Heart left ventricle (tissue), 16 donors: ENCODE measurements at regions of chr15 and their contacts with region 1.

Region 1: GRCh38 chr15:48861813-48862431 is 16.0 kb upstream of the EID1 start:
- DNase-seq: peak in 2 of 5 donors; percentile 24 to 46
- ATAC-seq: peak in 2 of 4 donors; percentile 70 to 78
- H3K4me3 ChIP-seq: no peak overlapping the region
- H3K27ac ChIP-seq: no peak overlapping the region
- H3K4me1 ChIP-seq: no peaks in the 10 kb centered on the region
- H3K27me3 ChIP-seq: no peaks in the 10 kb centered on the region
- CTCF ChIP-seq: peak; percentile 82 to 96 (median 86)
- POLR2A ChIP-seq: no peak

Region 2: DNA sequence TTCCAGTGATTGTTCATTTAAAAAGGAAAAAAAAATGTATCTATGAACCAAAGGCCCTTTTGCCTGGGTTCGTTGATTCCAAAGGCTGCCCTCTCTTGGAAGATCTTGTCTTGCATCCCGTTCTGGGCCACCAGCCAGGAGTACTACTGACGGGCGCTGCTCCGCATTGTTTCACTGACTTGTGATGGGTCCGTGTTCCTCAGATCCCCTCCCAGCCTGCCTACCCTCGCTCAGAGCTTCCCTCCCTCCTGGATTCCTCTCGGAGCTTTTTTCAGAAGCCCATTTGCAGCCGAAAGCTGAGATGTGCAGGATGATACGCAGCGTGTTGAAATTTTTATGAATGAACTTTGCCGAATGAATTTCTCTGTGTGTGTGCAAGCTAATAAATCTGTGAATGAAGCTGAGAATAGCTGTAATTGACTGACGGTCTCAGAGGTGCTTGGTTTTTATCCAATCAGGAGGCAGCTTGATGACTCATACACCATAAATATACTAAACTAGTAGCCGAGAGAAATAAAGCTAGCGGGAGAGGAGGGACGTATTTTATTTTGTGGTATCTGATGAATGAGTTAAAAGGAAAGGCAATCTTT is 101.7 kb after region 1 on chr15 and contains the start of gene SHC4:
- intact Hi-C with region 1: loop called in 2 of 10 experiments (anchors 5 kb)
- DNase-seq: peak; percentile 56 to 72 (median 69)
- ATAC-seq: peak; percentile 73 to 89 (median 78)
- H3K4me3 ChIP-seq: peak within 1 kb of the TSS; percentile 18 to 71 (median 58)
- H3K27ac ChIP-seq: peak within 1 kb of the TSS in 6 of 12 donors; percentile 1 to 67 (median 40)
- H3K4me1 ChIP-seq: peaks cover 0 to 25% (median 9%) of the 10 kb centered on the region in 12 donors
- H3K27me3 ChIP-seq: peaks cover 0 to 12% (median 0%) of the 10 kb centered on the region in 9 donors
- CTCF ChIP-seq: peak in 8 of 12 donors; percentile 11 to 49 (median 27)
- POLR2A ChIP-seq: no peak
- total RNA-seq, gene SHC4: 1.8 to 4.1 (median 2.6) TPM

Region 3: GRCh38 chr15:48975472-48976419 is 113.8 kb after region 1 on chr15:
- intact Hi-C with region 1: loop called in 1 of 10 experiments (anchors 1 kb)
- DNase-seq: peak; percentile 76 to 91 (median 84)
- ATAC-seq: peak; percentile 60 to 99 (median 96)
- H3K4me3 ChIP-seq: peak overlapping the region; percentile 21 to 78 (median 60)
- H3K27ac ChIP-seq: peak overlapping the region; percentile 33 to 86 (median 70)
- H3K4me1 ChIP-seq: peaks cover 0 to 13% (median 9%) of the 10 kb centered on the region in 12 donors
- H3K27me3 ChIP-seq: no peaks in the 10 kb centered on the region
- CTCF ChIP-seq: peak; percentile 83 to 99 (median 96)
- POLR2A ChIP-seq: no peak

Region 4: DNA sequence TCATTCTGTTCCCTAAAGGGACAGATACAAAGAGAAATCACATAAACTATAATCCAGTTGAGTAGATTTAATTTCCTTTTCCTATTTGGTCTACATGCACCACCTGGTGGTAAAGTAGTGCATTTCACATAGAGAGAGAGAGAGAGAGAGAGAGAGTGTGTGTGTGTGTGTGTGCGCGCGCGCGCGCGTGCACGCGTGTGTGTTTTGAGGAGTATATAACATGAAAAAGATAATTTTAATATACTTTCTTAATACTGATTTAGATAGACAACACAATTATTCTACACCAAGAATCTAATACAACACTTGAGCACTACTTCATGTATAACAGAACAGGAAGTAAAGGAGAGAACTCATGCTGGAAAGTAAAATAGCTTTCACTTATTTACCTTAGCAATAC is 560.1 kb after region 1 on chr15:
- intact Hi-C with region 1: loop called in 8 of 10 experiments (anchors 5 kb)
- DNase-seq: peak in 3 of 5 donors; percentile 20 to 55 (median 25)
- ATAC-seq: peak in 3 of 4 donors; percentile 52 to 64 (median 62)
- H3K4me3 ChIP-seq: peak overlapping the region in 9 of 12 donors; percentile 19 to 62 (median 32)
- H3K27ac ChIP-seq: peak overlapping the region in 6 of 12 donors; percentile 63 to 77 (median 69)
- H3K4me1 ChIP-seq: peaks cover 0 to 9% (median 0%) of the 10 kb centered on the region in 12 donors
- H3K27me3 ChIP-seq: no peaks in the 10 kb centered on the region
- CTCF ChIP-seq: peak; percentile 50 to 84 (median 67)
- POLR2A ChIP-seq: no peak

Region 5: GRCh38 chr15:50145451-50145872 is 1283.5 kb after region 1 on chr15:
- intact Hi-C with region 1: loop called (anchors 1 to 5 kb)
- DNase-seq: no peak
- ATAC-seq: peak; percentile 58 to 91 (median 83)
- H3K4me3 ChIP-seq: no peak overlapping the region
- H3K27ac ChIP-seq: no peak overlapping the region
- H3K4me1 ChIP-seq: peaks cover 0 to 6% (median 0%) of the 10 kb centered on the region in 12 donors
- H3K27me3 ChIP-seq: no peaks in the 10 kb centered on the region
- CTCF ChIP-seq: peak; percentile 47 to 73 (median 61)
- POLR2A ChIP-seq: no peak